Mammary epithelial cell (primary cell): ENCODE measurements at regions of chr2 and their contacts with region 1.

Region 1: DNA sequence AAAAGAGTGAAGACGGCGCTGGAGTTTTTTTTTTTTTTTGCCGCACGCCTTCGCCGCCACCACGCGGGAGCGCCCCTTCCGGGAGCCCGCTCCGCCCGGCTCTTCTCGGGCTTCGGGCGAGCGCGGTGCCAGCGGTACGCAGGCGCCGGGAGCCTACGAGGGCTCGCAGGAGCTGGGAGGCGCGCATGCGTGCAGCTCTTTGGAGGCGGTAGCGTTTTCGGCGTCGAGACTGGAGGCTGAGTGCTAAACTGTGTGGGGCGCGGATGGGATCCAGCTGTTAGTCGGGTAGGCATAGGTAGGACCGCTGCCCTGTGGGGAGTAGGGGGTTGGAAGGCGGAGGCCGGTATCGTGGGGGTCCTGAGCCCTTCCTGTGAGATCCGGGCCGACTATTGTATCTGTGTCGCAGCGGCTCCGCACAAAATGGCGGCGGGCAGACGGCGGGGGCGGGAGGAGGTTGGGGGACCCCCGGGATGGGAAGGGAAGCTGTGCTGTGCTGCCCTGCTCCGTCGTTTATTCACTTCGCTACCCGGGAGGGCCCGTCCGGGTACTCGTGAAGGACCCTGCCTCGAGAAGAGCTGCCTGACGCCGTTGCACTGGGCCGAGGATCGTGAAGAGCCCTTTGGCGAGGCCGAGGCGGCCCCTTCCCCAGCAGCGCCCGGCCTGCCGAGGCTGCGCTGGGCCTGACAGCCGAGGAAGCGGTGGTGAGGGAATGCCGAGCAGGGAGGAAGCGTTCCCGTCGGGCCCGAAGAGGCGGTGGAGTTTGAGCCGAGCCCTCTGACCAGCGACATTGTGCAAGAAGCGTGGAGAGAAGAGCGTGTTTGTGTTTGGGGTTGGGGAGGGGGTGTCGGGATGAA is at the start of gene ZNF638:
- DNase-seq: peak; percentile 90
- H3K4me3 ChIP-seq: peak within 1 kb of the TSS; percentile 93 to 100 (median 99)
- H3K27ac ChIP-seq: peak within 1 kb of the TSS; percentile 93
- H3K4me1 ChIP-seq: peaks cover 8% of the 10 kb centered on the region
- H3K27me3 ChIP-seq: no peaks in the 10 kb centered on the region
- CTCF ChIP-seq: peak; percentile 45 to 69
- total RNA-seq, gene ZNF638: 80.0 to 118 TPM

Region 2: DNA sequence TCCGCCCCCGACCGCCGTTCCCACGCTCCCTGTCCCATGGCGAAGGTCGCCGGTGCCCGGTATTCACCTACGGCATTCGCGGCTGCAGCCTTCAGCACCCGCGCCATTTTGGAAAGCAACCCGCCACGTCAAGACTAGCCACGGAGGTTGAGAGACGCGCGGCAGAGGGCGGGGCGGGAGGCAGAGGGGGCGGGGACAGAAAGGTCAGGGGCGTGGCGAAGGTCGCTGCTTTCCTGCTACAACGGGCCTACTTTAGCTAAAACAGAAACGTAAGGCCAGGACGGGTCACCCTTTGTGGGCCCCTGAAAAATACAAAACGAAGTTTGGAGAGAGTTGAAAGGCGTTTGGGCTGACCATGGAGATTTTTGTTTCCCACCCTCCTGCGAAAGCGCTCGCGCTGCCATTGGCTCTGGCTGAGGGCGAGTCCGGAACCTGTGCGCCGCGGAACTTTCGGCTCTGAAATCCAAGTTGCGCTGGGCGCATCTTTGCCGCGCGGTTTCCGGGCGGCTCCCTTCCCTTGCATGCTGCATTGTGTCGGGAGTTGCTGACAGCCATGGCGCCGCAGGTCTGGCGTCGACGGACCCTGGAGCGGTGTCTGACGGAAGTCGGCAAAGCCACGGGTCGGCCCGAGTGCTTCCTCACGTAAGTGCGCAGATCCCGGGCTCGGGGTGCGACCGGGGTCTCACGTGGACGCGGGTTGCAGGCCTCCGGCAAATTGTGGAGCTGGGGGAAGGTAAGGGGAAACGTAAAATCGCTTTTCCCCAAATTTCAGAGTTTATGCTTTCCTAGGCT is 201.5 kb before region 1 on chr2 and contains the starts of genes MCEE and MPHOSPH10:
- CTCF ChIA-PET with region 1: no interaction called
- dilution Hi-C with region 1: no loop called
- in situ Hi-C with region 1: no loop called
- intact Hi-C with region 1: loop called (anchors 2 kb)
- DNase-seq: peak; percentile 92
- H3K4me3 ChIP-seq: peak within 1 kb of the TSS; percentile 91 to 98 (median 91)
- H3K27ac ChIP-seq: peak within 1 kb of the TSS; percentile 71
- H3K4me1 ChIP-seq: peaks cover 4% of the 10 kb centered on the region
- H3K27me3 ChIP-seq: no peaks in the 10 kb centered on the region
- CTCF ChIP-seq: no peak
- total RNA-seq, gene MCEE: 7.0 to 9.3 TPM
- total RNA-seq, gene MPHOSPH10: 10.5 to 28.1 TPM

Region 3: GRCh38 chr2:71226965-71227560 is 104.7 kb before region 1 on chr2 and contains the start of gene PAIP2B:
- CTCF ChIA-PET with region 1: interaction called, 8 read pairs
- dilution Hi-C with region 1: no loop called
- in situ Hi-C with region 1: no loop called
- intact Hi-C with region 1: loop called (anchors 1 kb)
- DNase-seq: peak; percentile 100
- H3K4me3 ChIP-seq: peak within 1 kb of the TSS; percentile 83 to 92 (median 84)
- H3K27ac ChIP-seq: peak within 1 kb of the TSS; percentile 19
- H3K4me1 ChIP-seq: peaks cover 9% of the 10 kb centered on the region
- H3K27me3 ChIP-seq: peaks cover 3% of the 10 kb centered on the region
- CTCF ChIP-seq: no peak
- total RNA-seq, gene PAIP2B: 2.0 to 2.1 TPM

Region 4: DNA sequence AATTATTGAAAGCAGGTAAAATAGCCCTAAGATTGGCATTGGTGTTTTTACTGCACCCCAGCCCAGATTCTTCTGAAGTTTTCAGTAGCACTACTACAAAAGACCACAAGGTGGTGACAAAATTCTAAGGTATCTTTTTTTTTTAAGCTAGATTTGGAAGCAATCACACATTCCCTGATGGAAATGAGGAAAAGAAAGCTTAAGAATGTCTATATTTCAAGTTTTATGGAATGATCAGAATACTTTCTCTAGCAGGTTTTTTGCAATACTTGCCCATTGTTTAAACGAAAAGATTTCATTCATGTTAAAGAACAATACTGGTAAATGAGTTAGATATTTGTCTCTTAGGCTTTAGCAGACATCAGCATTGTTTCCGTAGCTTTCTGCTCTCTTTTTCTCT is 32.3 kb before region 1 on chr2:
- CTCF ChIA-PET with region 1: interaction called, 38 read pairs
- dilution Hi-C with region 1: no loop called
- in situ Hi-C with region 1: no loop called
- intact Hi-C with region 1: loop called (anchors 1 kb)
- DNase-seq: peak; percentile 16
- H3K4me3 ChIP-seq: no peak overlapping the region
- H3K27ac ChIP-seq: no peak overlapping the region
- H3K4me1 ChIP-seq: peaks cover 12% of the 10 kb centered on the region
- H3K27me3 ChIP-seq: no peaks in the 10 kb centered on the region
- CTCF ChIP-seq: peak; percentile 64 to 71

Region 5: GRCh38 chr2:71395471-71395870 is 63.7 kb after region 1 on chr2:
- CTCF ChIA-PET with region 1: no interaction called
- dilution Hi-C with region 1: no loop called
- in situ Hi-C with region 1: no loop called
- intact Hi-C with region 1: no loop called
- DNase-seq: no peak
- H3K4me3 ChIP-seq: no peak overlapping the region
- H3K27ac ChIP-seq: no peak overlapping the region
- H3K4me1 ChIP-seq: no peaks in the 10 kb centered on the region
- H3K27me3 ChIP-seq: no peaks in the 10 kb centered on the region
- CTCF ChIP-seq: no peak

Region 6: GRCh38 chr2:71778936-71779773 is 447.3 kb after region 1 on chr2:
- CTCF ChIA-PET with region 1: interaction called, 16 read pairs
- dilution Hi-C with region 1: no loop called
- in situ Hi-C with region 1: no loop called
- intact Hi-C with region 1: no loop called
- DNase-seq: no peak
- H3K4me3 ChIP-seq: no peak overlapping the region
- H3K27ac ChIP-seq: no peak overlapping the region
- H3K4me1 ChIP-seq: no peaks in the 10 kb centered on the region
- H3K27me3 ChIP-seq: peaks cover 2% of the 10 kb centered on the region
- CTCF ChIP-seq: peak; percentile 19 to 27